Calu3 (cell line): ENCODE measurements at regions of chr1 and their contacts with region 1.

Region 1: GRCh38 chr1:166910396-166910994 is 34.4 kb upstream of the TADA1 start:
- DNase-seq: peak; percentile 83
- H3K4me3 Mint-ChIP-seq: no peak overlapping the region
- H3K27ac Mint-ChIP-seq: no peak overlapping the region
- H3K4me1 Mint-ChIP-seq: peaks cover 18% of the 10 kb centered on the region
- H3K27me3 Mint-ChIP-seq: no peaks in the 10 kb centered on the region
- CTCF ChIP-seq: peak; percentile 57

Region 2: DNA sequence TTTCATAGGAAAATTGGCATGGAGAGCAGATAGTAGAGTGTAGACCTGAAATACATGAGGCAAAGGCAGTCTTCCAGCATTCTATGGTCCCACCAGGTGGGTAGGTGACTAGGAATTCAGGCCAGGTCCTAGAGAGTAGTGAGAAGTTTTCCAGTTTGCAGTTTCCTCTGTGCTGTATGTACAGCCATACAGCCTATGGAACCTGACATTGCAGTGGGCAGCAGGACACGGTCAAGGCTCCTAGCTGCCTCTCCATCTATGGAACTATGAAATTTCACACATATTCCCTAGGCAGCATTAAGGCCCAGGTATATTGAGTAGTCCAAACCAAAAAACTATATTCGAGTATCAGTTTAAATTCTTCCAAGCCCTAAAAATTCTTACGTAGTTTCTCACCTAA is 54.9 kb before region 1 on chr1:
- CTCF ChIA-PET with region 1: no interaction called
- intact Hi-C with region 1: no loop called
- DNase-seq: no peak
- H3K4me3 Mint-ChIP-seq: no peak overlapping the region
- H3K27ac Mint-ChIP-seq: no peak overlapping the region
- H3K4me1 Mint-ChIP-seq: peaks cover 11% of the 10 kb centered on the region
- H3K27me3 Mint-ChIP-seq: no peaks in the 10 kb centered on the region
- CTCF ChIP-seq: no peak

Region 3: DNA sequence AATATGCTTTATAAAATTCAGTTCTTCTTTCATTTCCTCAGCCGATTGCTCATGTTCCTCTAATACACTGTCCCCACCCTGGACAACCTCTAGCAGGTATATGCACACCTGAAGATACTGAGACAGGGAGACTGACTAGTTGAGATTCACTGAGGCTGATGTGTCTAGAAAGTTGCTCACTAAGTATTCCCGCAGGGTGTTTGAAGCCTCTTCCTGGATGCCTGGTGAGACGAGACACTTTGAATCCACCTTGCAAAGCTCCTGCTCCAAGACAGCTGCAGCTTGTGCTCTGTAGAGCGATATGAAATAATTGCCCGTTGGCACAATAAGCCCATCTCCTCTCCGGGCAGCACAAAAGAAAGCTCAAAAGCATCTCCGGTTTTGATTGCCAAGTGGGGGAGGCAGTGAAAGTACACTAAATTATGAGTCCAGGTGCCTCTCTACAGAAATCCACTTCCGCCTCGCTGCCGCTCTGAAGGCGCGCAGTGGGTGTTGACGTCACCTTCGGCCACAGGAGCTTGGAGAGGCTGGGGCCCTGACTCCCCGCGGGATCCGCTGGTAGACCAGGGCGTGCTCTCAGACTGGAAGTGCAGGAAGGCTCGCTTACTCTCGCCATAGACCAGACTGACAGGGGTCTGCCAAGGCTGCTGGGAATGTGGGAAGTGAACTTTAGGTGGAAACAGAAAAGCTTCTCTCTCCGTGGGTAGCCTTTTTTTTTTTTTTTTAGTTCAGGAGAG is 133.4 kb after region 1 on chr1:
- CTCF ChIA-PET with region 1: interaction called, 11 read pairs
- intact Hi-C with region 1: no loop called
- DNase-seq: peak; percentile 85
- H3K4me3 Mint-ChIP-seq: peak overlapping the region; percentile 76
- H3K27ac Mint-ChIP-seq: peak overlapping the region; percentile 50
- H3K4me1 Mint-ChIP-seq: peaks cover 17% of the 10 kb centered on the region
- H3K27me3 Mint-ChIP-seq: no peaks in the 10 kb centered on the region
- CTCF ChIP-seq: no peak

Region 4: GRCh38 chr1:167121375-167122120 is 211.1 kb after region 1 on chr1:
- CTCF ChIA-PET with region 1: interaction called, 4 read pairs
- intact Hi-C with region 1: loop called (anchors 5 kb)
- DNase-seq: peak; percentile 84
- H3K4me3 Mint-ChIP-seq: peak overlapping the region; percentile 78
- H3K27ac Mint-ChIP-seq: peak overlapping the region; percentile 17
- H3K4me1 Mint-ChIP-seq: peaks cover 24% of the 10 kb centered on the region
- H3K27me3 Mint-ChIP-seq: peaks cover 15% of the 10 kb centered on the region
- CTCF ChIP-seq: no peak

Region 5: DNA sequence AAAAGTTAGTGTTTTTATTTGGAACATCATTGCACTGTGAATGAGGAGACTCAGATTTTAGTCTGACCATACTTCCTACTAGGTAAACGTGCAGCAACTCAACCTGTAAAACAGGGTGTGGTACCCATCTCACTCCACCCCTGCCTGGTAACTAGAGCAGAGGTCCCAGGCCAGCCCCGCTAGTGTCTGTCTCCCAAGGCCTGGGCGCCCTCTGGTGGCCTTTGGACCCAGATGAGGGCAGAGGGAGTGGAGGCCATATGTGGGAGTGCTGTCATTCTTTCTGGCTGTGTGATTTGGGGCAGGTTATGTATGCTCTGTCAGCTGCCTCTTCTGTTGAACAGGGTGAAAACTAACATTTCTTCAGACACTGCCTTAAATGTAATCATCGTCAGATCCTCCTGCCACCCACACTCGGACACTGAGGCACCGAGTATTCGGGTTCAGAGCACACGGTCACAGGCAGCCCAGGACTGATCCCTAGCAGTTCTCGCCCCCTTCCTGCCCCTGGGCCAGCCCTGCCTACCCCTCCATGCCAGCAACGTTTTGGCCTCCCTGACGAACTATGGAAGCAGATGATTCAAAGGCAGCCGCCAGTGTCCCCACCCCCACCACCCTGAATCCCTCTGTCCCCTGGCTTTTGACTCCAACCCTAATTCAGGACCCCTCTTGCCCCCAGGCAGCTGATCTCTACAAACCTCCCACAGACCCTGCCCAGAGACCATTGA is 531.8 kb after region 1 on chr1:
- CTCF ChIA-PET with region 1: interaction called, 4 read pairs
- intact Hi-C with region 1: loop called (anchors 1 kb)
- DNase-seq: peak; percentile 97
- H3K4me3 Mint-ChIP-seq: no peak overlapping the region
- H3K27ac Mint-ChIP-seq: peak overlapping the region; percentile 18
- H3K4me1 Mint-ChIP-seq: peaks cover 19% of the 10 kb centered on the region
- H3K27me3 Mint-ChIP-seq: no peaks in the 10 kb centered on the region
- CTCF ChIP-seq: peak; percentile 85